ENCODE measurements at regions of chr11 and their contacts with region 1.

Region 1: GRCh38 chr11:102733232-102733875 is 8.6 kb upstream of the MMP8 start:
- DNase-seq: peak; percentile 48 to 75
- ATAC-seq: peak; percentile 91

Region 2: DNA sequence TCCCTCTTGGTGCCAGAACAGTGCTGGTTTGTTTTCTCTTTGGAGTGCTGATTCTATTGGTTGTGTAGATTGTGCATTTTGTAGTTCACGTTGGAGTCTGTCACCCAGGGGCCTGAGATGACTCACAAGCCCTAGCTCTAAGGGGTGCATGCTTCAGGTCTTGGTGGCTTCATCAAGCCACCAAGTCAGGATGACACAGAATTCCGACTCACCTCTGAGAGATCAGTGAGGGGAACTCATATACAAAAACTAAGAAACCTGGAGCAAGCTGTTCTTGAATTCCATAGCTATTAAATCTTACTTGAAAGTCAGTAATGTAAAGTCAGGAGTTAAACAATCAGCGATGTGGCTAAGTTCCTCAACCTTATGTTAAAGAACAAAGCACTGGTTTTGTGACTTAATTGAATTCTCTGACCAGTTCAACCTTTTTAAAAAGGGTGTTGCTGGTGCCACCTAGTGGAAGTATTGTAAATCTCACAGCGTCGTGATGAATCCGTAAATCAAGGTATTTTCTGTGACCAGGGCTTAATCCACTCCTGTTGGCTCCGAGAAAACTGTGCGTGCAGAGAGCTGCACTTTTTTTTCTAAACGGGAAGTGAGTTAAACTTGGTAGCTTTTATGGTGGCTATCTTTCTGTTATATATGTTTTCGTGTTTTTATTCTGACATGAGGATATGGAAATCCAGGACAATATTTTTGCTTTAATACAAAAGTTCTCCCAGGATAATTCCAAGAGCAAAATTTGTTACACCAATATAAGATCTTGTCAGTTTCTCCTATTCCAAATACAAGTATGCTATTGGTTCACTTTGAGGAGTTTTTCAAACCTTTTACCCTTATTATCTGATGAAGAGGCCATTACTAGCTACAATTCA is 207.6 kb after region 1 on chr11:
- intact Hi-C with region 1: loop called in 1 of 2 experiments (anchors 10 kb)
- DNase-seq: peak; percentile 33 to 36
- ATAC-seq: peak; percentile 80